ENCODE measurements at regions of chr20 and their contacts with region 1.

Region 1: GRCh38 chr20:57622579-57623377 is 2.6 kb upstream of the ZBP1 start:
- DNase-seq: no peak
- ATAC-seq: peak; percentile 38 to 51

Region 2: DNA sequence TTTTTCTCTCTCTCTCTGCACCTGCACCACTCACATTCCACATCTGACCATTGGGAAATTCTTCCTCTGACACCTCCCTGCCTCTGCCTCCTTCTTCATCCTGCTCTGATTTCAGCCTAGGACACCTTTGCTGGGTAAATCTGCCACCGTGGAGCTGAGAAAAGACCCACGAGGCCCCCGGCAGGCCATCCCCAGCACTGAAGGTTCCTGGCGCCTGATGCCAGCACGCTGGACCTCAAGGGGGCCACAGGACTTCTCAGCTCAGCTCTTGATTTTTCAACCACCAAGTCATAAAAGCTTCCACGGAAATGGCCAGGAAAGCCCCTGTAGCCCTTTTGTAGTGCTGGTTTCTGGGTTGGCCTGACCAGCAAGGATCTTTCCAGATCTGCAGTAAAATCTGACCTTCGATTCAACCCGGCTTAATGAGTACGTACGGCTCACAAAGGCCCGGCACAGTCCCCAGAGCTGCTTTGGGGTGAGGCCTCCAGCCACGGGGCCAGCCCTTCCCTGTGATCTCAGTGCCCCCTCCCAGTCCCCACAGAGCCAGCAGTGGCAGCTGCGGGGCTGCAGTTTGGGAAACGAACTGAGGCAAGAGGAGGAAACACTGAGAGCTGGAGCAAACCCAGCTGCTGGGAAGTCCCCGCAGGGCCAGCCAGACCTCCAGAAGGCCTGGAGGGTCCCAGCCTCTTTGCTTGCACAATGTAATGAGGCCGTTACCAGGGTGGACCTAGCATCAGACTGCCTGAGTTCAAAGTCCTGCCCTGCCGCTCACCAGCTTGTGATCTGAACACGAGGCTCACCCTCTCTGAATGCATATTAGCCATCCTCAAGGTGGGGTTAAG is 513.8 kb before region 1 on chr20:
- intact Hi-C with region 1: no loop called
- DNase-seq: no peak
- ATAC-seq: no peak

Region 3: DNA sequence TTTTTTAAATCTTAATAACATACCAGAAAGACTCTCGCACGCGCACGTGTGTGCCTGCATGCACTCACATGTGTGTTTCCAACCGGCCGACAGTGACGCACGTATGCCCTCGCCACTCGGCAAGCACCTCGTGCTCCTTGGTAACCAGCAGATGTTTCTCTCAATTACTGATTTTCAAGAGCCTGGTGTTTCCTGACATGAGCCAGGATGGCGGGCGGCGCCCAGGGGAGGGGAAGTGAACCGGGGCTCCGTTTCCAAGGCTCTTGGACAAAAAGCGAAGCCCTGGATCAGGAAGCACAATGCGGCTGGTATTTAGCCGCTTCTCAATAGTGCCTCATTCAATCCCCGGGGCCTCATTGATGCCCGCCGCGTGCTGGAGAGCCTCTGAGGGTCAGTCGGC is 49.4 kb after region 1 on chr20:
- intact Hi-C with region 1: no loop called
- DNase-seq: peak; percentile 85
- ATAC-seq: peak; percentile 34 to 82

Region 4: DNA sequence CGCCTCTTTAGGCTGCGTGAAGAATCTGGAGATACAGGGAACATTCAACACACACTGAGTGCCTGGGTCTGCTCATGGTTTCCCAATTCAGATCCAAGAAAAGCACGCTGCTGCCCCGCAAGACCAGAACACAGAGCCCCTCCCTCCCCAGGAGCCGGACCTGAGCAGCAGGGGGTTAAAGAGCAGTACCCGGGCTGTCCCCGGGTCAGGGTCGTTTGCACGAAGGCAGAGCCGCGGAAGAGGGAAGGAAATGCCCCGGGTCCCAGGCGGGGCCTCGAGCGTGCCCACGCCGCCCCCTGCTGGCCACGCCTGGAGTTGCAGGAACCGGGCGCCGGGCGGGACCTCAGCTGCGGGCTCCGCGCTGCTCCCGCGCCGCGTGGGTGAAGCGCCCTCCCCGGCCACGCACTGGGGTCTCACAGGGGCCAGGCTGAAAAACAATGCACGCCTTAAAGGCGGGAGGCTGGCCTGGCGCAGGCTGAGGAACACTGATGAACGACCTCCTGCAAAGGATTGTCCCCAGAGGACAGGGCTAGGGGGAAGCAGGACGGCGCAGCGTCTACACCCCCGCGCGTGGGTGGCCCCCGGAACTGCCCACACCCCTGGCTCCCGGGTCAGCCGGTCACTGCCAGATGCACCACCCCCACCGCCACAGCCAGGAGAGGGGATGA is 556.8 kb after region 1 on chr20:
- intact Hi-C with region 1: loop called in 1 of 2 experiments (anchors 10 kb)
- DNase-seq: peak; percentile 59
- ATAC-seq: peak; percentile 80 to 84

Measured in left cardiac atrium (tissue), 4 donors.